Activated T-helper 2 cell treated with anti-CD3 and anti-CD28 coated beads, Interferon-gamma antibody, Interleukin-2, Interleukin-4, amounts not matched to agents 10 μg/mL and 5 μg/mL and 100 μg/mL, durations not matched to agents 14 hours and 24 hours and 36 hours (primary cell): ENCODE measurements at regions of chr3 and their contacts with region 1.

Region 1: GRCh38 chr3:72756900-72757299 is 91.3 kb downstream of the SHQ1 start:
- DNase-seq: peak; percentile 53
- H3K4me3 Mint-ChIP-seq: no peak overlapping the region
- H3K27ac Mint-ChIP-seq: peak overlapping the region; percentile 45
- H3K4me1 Mint-ChIP-seq: peaks cover 34% of the 10 kb centered on the region
- H3K27me3 Mint-ChIP-seq: no peaks in the 10 kb centered on the region

Region 2: DNA sequence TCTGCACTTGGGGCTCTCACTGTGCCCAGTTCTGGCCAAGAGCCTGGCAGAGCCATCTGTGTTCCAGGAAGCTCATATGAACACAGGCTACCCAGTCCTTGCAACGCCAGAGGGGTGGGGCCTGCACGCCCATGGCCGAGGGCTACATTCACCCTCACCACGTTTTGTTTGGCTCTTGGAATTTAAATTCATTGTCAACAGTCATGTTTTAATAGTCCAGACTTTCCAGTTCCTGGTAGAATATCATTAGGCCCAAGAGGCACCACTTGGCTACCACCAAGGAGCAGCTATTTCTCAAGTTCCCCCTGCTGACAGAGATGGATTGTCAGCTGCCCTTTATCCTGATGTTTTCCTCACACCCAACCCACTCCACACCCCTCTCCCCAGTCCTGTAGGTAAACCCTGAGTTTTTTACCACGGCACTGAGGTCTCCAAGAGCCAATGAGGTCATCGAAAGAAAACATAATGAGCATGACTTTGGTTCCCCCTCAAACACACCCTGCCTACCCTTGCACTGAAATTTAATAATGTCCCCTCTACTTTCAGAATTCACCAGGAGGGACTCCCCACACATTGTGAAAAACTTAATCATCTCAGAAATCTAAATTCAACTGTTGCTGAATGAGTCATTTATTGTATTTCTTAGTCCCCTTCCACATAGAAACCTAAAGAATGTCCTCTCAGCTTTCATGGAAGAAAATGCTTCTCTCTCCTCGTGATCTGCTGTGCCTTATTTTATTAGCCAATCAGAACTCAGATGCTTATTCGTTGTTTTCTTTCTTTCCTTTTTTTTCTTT is 33.8 kb before region 1 on chr3:
- intact Hi-C with region 1: loop called (anchors 5 kb)
- DNase-seq: no peak
- H3K4me3 Mint-ChIP-seq: no peak overlapping the region
- H3K27ac Mint-ChIP-seq: peak overlapping the region; percentile 54
- H3K4me1 Mint-ChIP-seq: peaks cover 19% of the 10 kb centered on the region
- H3K27me3 Mint-ChIP-seq: peaks cover 3% of the 10 kb centered on the region

Region 3: DNA sequence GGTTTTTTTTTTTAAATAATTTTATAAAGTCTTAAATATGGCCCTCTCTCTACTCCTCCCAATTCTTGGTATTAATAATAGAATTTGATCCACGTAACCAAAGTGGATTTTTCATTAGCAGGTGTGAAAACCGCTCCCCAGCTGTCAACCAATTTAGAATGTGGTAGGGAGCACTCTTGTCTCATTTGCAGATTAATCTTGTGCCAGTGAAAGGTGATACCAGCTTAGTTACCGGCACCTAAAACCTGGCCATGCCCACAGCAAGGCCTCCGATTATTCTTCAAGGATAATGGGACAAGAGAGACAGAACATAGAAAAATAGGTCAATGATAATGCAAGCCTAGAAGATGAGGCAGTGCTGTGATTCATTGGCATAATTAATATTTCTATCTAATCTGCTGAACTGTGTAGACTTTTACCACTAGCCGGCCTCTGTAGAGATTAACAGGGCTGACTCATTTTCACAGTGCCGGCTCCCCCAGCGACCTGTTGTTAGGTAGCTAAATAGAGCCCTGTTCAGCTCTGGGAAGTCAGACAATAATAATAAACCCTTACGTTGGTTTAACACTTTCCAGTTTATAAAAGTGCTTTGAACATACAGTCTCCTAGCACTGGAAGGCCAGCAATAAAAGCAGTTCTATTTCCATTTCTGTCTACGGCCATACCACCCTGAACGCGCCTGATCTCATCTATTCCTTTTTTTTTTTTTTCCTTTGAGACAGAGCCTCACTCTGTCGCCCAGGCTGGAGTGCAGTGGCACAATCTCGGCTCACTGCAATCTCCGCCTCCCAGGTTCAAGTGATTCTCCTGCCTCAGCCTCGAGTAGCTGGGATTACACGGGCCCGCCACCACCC is 11.5 kb before region 1 on chr3:
- intact Hi-C with region 1: no loop called
- DNase-seq: no peak
- H3K4me3 Mint-ChIP-seq: no peak overlapping the region
- H3K27ac Mint-ChIP-seq: no peak overlapping the region
- H3K4me1 Mint-ChIP-seq: peaks cover 19% of the 10 kb centered on the region
- H3K27me3 Mint-ChIP-seq: no peaks in the 10 kb centered on the region

Region 4: GRCh38 chr3:72768006-72768441 is 11.1 kb after region 1 on chr3:
- intact Hi-C with region 1: no loop called
- DNase-seq: no peak
- H3K4me3 Mint-ChIP-seq: no peak overlapping the region
- H3K27ac Mint-ChIP-seq: no peak overlapping the region
- H3K4me1 Mint-ChIP-seq: peaks cover 7% of the 10 kb centered on the region
- H3K27me3 Mint-ChIP-seq: no peaks in the 10 kb centered on the region

Region 5: DNA sequence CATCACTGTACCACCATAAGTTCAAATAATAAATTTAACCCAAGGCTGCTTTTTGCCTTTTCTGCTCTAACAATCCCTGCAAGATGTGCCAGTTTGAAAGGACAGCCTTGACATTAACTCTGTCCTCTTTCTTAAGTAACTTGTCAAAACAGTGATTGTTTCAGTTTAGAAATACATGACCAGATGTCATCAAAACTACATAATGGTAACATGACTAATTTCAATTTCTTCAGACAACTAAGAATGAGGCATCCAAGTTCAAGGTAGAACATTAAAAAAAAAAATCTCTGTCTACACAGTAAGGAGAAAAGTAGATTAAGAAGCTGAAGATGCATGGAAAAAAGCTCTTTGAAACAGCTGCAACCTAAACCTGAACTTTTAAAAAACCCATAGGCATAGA is 44.0 kb after region 1 on chr3:
- intact Hi-C with region 1: loop called (anchors 5 kb)
- DNase-seq: no peak
- H3K4me3 Mint-ChIP-seq: no peak overlapping the region
- H3K27ac Mint-ChIP-seq: peak overlapping the region; percentile 58
- H3K4me1 Mint-ChIP-seq: peaks cover 24% of the 10 kb centered on the region
- H3K27me3 Mint-ChIP-seq: no peaks in the 10 kb centered on the region